ENCODE measurements at regions of chr1 and their contacts with region 1.

Region 1: DNA sequence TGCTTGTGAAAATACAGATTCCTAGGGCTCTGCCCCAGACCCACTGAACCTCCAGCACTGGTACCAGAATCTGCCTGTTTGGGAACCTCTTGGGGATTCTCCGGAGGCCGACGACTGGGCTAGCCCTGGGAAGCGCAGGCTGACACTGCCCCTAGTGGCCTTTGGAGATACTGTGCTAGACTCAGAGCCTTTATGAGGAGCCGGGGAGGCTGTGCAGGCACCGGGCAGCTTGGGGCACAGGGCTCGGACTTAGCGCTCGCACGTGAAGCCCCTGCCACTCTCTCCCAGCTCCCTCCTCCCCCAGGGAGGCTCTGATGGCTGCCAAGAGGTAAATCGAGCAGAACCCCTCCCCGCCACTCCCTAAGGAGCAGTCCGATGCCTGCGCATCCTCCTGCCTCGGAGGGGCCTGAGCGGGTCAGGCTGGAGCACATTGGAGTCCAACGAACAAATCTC is 144.6 kb upstream of the TNR start:
- DNase-seq: peak; percentile 49
- H3K4me3 ChIP-seq: no peak overlapping the region
- H3K27ac ChIP-seq: no peak overlapping the region
- H3K4me1 ChIP-seq: peaks cover 7% of the 10 kb centered on the region
- H3K27me3 ChIP-seq: no peaks in the 10 kb centered on the region
- CTCF ChIP-seq: peak; percentile 88

Region 2: DNA sequence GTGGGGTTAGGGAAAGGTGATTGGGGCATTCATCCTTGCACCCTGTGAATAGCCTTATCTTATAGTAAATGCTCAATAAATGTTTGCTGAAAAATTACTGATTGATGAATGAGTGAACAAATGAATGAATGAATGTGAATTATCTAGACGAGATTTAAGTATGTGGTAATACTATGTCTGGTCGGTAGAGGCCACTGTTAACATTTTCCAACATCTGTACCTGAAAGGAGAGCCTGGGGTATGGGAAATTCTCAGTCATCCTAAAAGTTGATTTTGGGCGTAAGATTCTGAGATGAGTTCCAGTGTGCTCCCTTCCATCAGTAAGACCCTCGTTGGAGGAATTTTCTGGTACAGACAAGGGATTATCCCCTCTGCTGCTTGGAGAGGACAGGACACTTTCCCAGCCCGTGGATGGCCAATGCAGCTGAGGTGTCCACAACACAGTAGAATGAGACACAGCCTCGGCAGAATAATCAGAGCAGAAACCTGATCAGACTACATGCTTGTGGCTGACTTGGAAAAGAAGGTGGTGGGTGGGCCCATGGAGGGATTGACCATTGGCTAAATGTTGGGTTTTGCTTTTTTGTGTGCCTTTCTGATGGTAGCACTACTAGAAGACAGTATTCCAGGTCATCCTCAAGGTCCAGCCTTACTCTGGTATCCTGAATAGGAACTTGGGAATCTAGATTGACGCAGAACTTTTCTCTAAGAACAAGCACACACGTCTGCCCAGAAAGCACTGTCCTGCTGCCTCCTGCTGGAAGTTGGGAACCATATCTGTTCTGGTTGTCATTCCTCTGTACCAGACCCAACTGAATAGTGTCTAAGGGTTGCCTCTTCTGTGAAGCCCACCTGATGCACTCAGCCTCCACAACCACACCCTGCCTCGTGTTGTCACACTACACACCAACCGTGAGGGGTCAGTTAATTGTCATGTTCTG is 406.6 kb before region 1 on chr1:
- intact Hi-C with region 1: loop called (anchors 10 kb)
- DNase-seq: no peak
- H3K4me3 ChIP-seq: no peak overlapping the region
- H3K27ac ChIP-seq: no peak overlapping the region
- H3K4me1 ChIP-seq: no peaks in the 10 kb centered on the region
- H3K27me3 ChIP-seq: peaks cover 17% of the 10 kb centered on the region
- CTCF ChIP-seq: peak; percentile 73

Region 3: DNA sequence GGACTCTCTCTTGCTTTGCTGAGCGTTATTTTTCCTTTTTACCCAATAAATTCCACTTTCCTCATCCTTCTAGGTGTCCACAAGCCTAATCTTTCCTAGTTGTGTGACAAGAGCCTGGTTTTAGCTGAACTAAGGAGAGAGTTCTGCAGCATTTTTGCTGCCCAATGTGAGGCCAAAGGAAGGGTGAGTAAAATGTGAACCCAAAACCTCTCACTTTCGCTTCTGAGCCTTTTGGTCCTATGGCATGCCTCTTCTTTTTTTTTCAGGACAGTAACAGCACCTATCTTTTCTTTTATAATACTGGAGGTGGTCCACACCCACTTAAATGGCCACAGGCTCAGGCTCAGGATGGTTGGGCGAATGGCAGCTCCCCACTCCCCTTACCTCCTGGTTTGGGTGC is 208.0 kb after region 1 on chr1:
- intact Hi-C with region 1: no loop called
- DNase-seq: no peak
- H3K4me3 ChIP-seq: no peak overlapping the region
- H3K27ac ChIP-seq: no peak overlapping the region
- H3K4me1 ChIP-seq: no peaks in the 10 kb centered on the region
- H3K27me3 ChIP-seq: no peaks in the 10 kb centered on the region
- CTCF ChIP-seq: no peak

Measured in left ventricle myocardium inferior (tissue), 1 donor.